ENCODE measurements at regions of chr2 and their contacts with region 1.

Region 1: DNA sequence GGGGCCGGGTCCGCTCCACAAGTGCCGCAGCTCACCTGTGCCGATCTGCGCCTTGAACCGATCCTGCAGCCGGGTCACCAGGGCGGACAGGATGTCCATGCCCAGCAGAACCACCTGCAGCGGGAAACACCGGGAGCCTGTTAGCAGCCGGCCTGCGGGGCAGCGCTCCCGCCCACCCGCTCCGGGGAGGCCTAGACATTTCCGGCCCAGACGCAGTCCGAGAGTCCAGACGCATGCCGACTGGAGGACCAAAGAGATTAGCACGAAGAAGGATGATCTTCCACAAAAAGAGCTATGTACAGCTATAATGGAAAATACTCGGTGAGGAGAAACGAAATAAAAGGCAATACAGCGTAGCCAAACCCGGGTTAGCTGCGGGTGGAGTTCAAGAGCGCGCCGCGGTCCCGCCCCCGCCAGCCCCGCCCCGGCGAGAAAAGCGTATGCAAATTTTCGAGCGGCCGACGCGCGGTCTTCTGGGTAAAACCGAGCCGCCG is 421 bp upstream of the RNU4ATAC start:
- DNase-seq: peak; percentile 72 to 94 (median 87)

Region 2: GRCh38 chr2:121649596-121650314 is 119.5 kb after region 1 on chr2:
- intact Hi-C with region 1: loop called (anchors 2 kb)
- DNase-seq: peak; percentile 92 to 98 (median 97)

Region 3: DNA sequence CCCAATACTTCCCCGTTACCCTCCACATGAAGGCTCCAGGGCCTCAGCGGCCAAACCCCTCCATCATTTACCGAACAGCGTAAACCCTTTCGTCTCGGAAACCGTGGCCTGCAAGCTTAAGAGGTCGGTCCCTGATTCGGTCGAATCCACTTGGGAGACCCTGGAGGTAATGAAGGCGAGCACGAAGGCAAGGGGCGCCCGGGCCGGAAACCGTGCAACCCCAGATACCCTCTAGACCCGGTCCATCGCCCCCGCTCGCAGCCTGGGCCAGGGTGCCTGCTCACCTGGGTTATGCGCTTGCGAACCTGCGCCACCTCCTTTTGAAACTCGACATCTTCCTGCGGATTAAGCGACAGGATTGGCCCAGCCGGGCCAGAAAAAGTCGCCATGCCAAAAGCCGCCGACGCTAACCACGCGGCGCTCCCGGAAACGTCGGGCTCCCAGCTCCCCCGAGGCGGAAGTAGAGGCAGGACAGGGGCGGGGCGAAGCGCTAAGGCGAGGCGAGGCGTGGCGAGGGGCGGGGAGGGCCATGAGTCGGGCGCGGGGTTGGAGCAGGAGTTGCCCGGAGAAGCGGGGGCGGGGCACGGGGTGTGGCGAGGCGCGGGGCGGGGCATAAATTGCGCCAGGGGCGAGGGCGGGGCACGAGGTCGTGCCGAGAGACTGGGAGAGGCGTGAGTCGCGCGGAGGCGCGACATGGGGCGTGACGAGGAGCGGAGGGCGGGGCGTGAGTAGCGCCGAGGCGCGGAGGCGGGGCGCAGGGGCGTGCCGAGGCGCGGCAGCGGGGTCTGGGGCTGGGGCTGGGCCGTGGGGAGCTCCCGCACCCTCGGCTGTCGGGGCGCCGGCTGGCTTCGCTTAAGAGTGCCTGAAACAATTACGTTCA is 206.4 kb after region 1 on chr2 and contains the start of gene NIFK:
- intact Hi-C with region 1: loop called (anchors 10 kb)
- DNase-seq: peak; percentile 96 to 100 (median 100)